BJ (cell line): ENCODE measurements at regions of chr13 and their contacts with region 1.

Region 1: DNA sequence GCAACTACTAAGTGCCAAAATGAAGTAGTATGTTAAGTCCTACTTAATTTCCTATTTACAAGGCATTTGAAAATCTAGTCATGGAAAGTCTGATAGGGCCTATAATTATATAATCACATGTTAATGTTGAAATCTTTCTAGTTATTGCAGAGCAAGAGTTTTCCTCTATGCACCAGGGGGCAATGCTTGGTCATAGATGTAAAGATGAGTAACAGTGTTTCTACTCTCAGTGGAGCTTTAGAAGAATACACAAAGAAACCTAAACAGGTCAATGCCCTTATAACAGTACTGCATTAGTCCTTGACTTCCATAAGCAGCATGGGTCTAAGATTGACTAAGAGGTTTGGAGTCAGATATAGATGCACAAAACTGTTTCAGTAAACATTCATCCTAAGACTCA is 218.7 kb downstream of the KCTD12 start:
- DNase-seq: no peak
- H3K4me3 ChIP-seq: no peak overlapping the region
- H3K27me3 ChIP-seq: no peaks in the 10 kb centered on the region
- CTCF ChIP-seq: peak; percentile 50

Region 2: DNA sequence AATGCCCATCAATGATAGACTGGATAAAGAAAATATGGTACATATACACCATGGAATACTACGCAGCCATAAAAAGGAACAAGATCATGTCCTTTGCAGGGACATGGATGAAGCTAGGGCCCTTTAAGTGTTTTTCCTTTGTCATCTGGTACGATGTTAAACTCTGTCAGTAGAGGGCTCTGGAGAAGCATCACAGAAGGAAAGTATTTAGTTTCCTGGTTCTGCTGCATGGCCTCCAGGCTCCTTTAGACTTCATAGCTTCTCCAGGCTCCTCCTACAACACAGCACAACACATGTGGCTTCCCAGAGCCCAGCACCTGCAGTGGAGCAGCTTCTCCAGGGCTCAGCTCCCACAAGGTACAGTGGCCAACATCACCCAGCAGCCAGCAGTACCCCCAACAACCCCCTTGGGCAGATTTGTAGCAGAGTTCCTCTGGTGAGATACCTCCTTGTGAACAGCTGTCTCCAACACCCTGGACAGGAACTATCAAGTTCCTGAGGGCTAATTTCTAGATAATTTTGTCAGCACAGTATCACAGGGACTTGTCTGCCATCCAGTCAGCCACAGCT is 155.2 kb after region 1 on chr13:
- CTCF ChIA-PET with region 1: interaction called, 22 read pairs
- POLR2A ChIA-PET with region 1: no interaction called
- DNase-seq: no peak
- H3K4me3 ChIP-seq: no peak overlapping the region
- H3K27me3 ChIP-seq: no peaks in the 10 kb centered on the region; the same call in 1 of the 2 replicates
- CTCF ChIP-seq: peak; percentile 39

Region 3: GRCh38 chr13:76894401-76895110 is 227.0 kb after region 1 on chr13:
- CTCF ChIA-PET with region 1: interaction called, 11 read pairs
- POLR2A ChIA-PET with region 1: no interaction called
- DNase-seq: no peak
- H3K4me3 ChIP-seq: no peak overlapping the region
- H3K27me3 ChIP-seq: peaks cover 2% of the 10 kb centered on the region; the same call in 1 of the 2 replicates
- CTCF ChIP-seq: no peak

Region 4: DNA sequence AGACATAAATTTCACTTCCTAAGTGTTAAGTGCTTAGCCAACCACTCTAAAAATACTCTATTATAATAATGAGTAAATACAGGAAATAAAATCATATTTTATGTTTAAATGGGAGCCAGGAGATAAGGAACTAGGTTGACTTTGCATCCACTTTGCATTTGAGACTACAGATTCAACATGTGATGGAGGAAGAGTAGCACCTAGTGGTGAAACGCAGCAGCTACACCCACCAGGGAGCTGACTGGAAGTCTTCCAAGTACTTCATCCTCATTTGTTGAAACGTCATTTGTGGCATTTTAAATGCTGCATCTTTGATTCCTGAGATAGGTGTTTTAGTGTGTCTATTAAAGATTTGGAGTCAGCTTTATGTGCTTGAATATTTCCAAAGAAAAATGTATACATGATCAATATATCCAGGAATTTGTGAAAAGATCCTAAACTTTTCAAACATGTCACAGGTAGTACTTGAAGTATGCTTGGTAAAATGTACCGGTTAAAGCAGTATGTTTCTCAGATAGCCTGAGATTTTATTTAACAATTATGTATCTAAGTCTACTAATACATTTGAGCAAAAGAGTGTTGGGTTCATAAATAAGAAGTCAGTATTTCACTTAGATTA is 236.1 kb after region 1 on chr13:
- CTCF ChIA-PET with region 1: interaction called, 108 read pairs
- POLR2A ChIA-PET with region 1: no interaction called
- DNase-seq: no peak
- H3K4me3 ChIP-seq: no peak overlapping the region
- H3K27me3 ChIP-seq: peaks cover 10% of the 10 kb centered on the region
- CTCF ChIP-seq: peak; percentile 98